ENCODE measurements at regions of chr6 and their contacts with region 1.

Region 1: DNA sequence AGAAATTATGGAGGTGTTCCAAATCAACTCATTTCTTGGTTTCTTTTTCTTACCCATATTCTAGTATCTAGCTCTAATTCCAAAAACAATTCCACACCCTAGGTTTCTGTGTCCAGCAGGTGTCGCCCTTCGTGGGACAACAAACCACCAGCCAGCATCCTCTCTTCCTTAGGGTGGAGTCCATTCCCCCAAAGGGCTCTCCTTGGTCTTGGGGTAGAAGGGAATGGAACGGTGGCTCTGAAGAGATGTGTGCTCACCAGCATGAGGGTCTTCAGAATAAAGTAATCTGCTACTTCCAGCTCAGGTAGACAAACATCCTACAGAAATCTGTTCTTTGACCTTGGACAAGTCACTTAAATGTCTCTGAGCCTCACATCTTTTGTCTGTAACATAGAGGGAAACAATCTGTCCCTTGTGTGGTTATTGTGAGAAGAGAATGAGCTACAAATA is 7.2 kb downstream of the HLA-DMB start:
- DNase-seq: peak; percentile 50 to 87 (median 81)
- ATAC-seq: peak; percentile 61
- H3K4me3 ChIP-seq: no peak overlapping the region
- H3K4me3 Mint-ChIP-seq: no peak overlapping the region
- H3K27ac ChIP-seq: no peak overlapping the region
- H3K27ac Mint-ChIP-seq: no peak overlapping the region
- H3K4me1 ChIP-seq: no peaks in the 10 kb centered on the region
- H3K4me1 Mint-ChIP-seq: peaks cover 5% of the 10 kb centered on the region
- H3K27me3 ChIP-seq: no peaks in the 10 kb centered on the region
- H3K27me3 Mint-ChIP-seq: no peaks in the 10 kb centered on the region
- CTCF ChIP-seq: peak; percentile 72

Region 2: DNA sequence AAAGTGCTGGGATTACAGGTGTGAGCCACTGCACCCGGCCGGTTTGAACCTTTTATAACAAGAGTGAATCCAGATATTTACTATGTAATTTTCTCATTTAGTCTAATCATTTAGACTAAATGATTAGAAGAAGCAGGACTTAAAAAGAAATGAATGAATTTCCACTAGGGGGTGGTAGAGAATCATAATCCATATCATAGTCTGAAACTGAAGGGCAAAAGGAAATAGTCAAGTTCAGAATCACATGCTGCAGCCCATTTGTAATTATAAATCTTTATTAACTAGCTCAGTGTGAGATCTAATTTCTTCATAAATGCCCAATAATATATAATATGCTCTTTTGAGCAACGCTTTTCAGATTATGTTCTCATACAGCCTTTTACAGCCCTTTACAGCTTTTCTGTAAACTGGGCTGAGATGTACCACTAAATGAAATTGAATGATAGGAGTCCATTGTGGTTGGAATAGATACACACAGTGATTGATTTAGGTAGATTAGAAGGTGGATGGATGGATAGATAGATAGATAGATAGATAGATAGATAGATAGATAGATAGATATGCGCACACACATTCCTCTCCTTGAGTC is 47.9 kb before region 1 on chr6:
- CTCF ChIA-PET with region 1: interaction called, 45 read pairs
- POLR2A ChIA-PET with region 1: no interaction called
- intact Hi-C with region 1: loop called (anchors 1 kb)
- DNase-seq: peak in 2 of 9 experiments; percentile 78 to 85
- ATAC-seq: peak; percentile 71
- H3K4me3 ChIP-seq: no peak overlapping the region
- H3K4me3 Mint-ChIP-seq: no peak overlapping the region
- H3K27ac ChIP-seq: no peak overlapping the region
- H3K27ac Mint-ChIP-seq: no peak overlapping the region
- H3K4me1 ChIP-seq: no peaks in the 10 kb centered on the region
- H3K4me1 Mint-ChIP-seq: no peaks in the 10 kb centered on the region
- H3K27me3 ChIP-seq: no peaks in the 10 kb centered on the region
- H3K27me3 Mint-ChIP-seq: no peaks in the 10 kb centered on the region
- CTCF ChIP-seq: peak; percentile 77

Region 3: DNA sequence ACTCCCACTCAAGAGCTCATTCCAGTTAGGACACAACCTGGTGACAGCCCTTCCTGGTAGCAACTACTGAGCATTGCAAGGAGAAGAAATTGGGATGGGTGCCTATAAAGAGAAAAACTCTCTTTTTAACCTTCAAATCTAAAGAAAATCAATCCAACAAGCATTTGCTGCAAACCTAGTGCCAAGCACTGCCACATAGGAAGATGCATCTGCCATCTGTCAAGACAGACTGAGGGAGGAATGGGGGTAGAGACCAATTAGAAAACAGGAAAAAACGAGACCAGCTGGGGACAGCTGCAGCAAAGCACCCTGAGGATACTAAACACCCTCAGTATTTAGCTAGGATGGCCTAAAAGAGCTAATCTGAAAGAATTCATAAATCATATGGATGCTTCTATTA is 20.7 kb before region 1 on chr6:
- CTCF ChIA-PET with region 1: interaction called, 11 read pairs
- POLR2A ChIA-PET with region 1: no interaction called
- intact Hi-C with region 1: no loop called
- DNase-seq: no peak
- ATAC-seq: no peak
- H3K4me3 ChIP-seq: no peak overlapping the region
- H3K4me3 Mint-ChIP-seq: no peak overlapping the region
- H3K27ac ChIP-seq: no peak overlapping the region
- H3K27ac Mint-ChIP-seq: no peak overlapping the region
- H3K4me1 ChIP-seq: no peaks in the 10 kb centered on the region
- H3K4me1 Mint-ChIP-seq: no peaks in the 10 kb centered on the region
- H3K27me3 ChIP-seq: no peaks in the 10 kb centered on the region
- H3K27me3 Mint-ChIP-seq: peaks cover 15% of the 10 kb centered on the region
- CTCF ChIP-seq: no peak

Region 4: DNA sequence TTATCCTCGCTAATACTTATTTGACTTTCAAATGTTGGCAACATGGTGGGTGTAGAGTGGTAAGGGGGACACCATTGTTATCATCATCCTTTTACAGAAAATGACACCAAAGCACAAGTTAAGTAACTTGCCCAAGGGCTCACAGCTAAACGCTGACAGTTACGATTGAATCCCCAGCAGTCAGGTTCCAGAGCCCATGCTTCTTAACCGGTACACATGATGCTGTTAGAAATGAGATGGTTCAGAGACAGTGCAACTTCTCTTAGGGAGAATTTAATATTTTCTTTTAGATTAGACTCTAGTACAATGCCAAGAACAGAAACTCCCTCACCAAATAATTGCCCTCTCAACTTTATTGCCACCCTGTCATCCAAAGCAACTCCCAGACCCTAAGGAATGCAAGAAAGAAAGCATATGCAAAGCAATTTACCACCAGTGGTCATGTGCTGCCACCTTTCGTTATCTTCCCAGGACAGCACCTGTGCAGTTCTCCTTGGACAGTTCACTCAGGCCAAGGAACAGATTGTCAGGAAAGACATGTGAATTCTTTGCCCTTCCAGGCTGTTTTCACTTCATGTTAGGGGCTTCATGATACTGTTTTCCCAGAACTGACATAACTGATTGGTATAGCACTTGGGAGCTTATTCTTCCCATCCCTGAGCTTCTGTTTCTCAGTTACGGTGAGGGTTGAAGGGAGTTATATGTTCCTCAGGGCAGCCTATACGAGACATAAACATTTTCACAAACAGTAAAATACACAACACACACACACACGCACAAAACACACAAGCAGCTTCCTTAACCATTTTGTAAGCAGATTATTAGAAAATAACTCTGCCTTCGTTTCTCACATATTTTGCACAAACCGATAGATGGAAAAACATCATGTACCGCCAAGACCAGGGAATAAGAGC is 14.1 kb after region 1 on chr6:
- CTCF ChIA-PET with region 1: interaction called, 326 read pairs
- POLR2A ChIA-PET with region 1: interaction called, 7 read pairs
- intact Hi-C with region 1: loop called (anchors 1 kb)
- DNase-seq: peak in 6 of 9 experiments; percentile 30 to 75 (median 56)
- ATAC-seq: no peak
- H3K4me3 ChIP-seq: no peak overlapping the region
- H3K4me3 Mint-ChIP-seq: no peak overlapping the region
- H3K27ac ChIP-seq: no peak overlapping the region
- H3K27ac Mint-ChIP-seq: no peak overlapping the region
- H3K4me1 ChIP-seq: peaks cover 49% of the 10 kb centered on the region
- H3K4me1 Mint-ChIP-seq: peaks cover 59% of the 10 kb centered on the region
- H3K27me3 ChIP-seq: no peaks in the 10 kb centered on the region
- H3K27me3 Mint-ChIP-seq: no peaks in the 10 kb centered on the region
- CTCF ChIP-seq: peak; percentile 62

Region 5: DNA sequence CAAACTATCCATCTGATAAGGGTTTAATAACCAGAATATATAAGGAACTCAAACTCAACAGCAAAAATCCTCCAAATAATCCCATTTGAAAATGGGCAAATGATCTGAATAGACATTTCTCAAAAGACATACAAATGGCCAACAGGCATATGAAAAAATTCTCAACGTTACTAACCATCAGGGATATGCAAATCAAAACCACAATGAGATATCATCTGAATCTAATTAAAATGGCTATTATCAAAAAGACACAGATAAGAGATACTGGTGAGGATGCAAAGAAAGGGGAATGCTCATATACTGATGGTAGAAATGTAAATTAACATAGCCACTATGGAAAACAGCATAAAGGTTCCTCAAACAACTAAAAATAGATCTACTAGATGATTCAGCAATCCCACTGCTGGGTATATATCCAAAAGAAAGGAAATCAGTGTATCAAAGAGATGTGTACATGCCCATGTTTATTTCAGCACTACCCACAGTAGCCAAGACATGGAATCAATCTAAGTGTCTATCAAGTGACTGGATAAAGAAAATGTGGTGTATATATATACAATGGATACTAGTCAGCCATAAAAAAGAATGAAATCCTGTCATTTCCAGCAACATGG is 28.7 kb after region 1 on chr6:
- CTCF ChIA-PET with region 1: interaction called, 326 read pairs
- POLR2A ChIA-PET with region 1: interaction called, 222 read pairs
- intact Hi-C with region 1: loop called in 1 of 2 experiments (anchors 1 kb)
- DNase-seq: no peak
- ATAC-seq: no peak
- H3K4me3 ChIP-seq: no peak overlapping the region
- H3K4me3 Mint-ChIP-seq: no peak overlapping the region
- H3K27ac ChIP-seq: no peak overlapping the region
- H3K27ac Mint-ChIP-seq: peak overlapping the region; percentile 28
- H3K4me1 ChIP-seq: peaks cover 25% of the 10 kb centered on the region
- H3K4me1 Mint-ChIP-seq: peaks cover 59% of the 10 kb centered on the region
- H3K27me3 ChIP-seq: no peaks in the 10 kb centered on the region
- H3K27me3 Mint-ChIP-seq: no peaks in the 10 kb centered on the region
- CTCF ChIP-seq: no peak

Region 6: DNA sequence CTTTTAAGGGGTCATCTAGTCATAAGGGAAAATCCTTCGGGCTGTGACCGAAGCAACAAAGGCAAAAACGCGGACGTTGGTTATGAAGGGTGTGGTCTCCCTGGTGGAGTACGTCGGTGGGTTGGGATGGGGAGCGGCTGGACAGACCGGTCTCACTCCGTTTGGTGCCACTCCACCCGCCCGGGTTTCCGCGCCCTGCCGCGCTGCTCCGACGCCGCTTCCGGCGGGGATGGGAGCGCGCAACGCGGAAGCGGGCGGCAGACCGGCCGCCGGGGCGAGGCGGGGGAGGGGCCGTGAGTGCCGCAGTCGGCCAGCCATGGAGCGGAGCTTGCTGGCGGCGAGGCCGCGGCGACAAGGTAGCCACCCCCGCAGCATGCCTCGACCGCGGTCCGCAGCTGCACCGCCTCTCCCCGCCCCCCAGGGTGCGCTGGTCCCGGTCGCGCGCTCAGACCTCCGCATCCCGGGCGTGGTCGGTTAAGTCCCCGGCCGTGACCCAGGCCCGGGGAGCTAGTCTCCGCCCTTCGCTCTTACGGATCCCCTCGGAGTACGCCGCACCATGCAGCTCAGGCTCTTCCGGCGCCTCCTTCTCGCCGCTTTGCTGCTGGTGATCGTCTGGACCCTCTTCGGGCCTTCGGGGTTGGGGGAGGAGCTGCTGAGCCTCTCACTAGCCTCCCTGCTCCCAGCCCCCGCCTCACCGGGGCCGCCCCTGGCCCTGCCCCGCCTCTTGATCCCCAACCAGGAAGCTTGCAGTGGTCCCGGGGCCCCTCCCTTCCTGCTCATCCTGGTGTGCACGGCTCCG is 343.4 kb after region 1 on chr6 and contains the start of gene B3GALT4:
- CTCF ChIA-PET with region 1: no interaction called
- POLR2A ChIA-PET with region 1: no interaction called
- intact Hi-C with region 1: no loop called
- DNase-seq: peak; percentile 28 to 88 (median 68)
- ATAC-seq: peak; percentile 67
- H3K4me3 ChIP-seq: peak within 1 kb of the TSS; percentile 93 to 95
- H3K4me3 Mint-ChIP-seq: peak within 1 kb of the TSS; percentile 89
- H3K27ac ChIP-seq: peak within 1 kb of the TSS; percentile 79 to 95
- H3K27ac Mint-ChIP-seq: peak within 1 kb of the TSS; percentile 92
- H3K4me1 ChIP-seq: peaks cover 61% of the 10 kb centered on the region
- H3K4me1 Mint-ChIP-seq: peaks cover 71% of the 10 kb centered on the region
- H3K27me3 ChIP-seq: no peaks in the 10 kb centered on the region
- H3K27me3 Mint-ChIP-seq: no peaks in the 10 kb centered on the region
- CTCF ChIP-seq: peak; percentile 55
- total RNA-seq, gene B3GALT4: 7.9 to 8.8 TPM